GM12878 (cell line): ENCODE measurements at regions of chr3 and their contacts with region 1.

Region 1: DNA sequence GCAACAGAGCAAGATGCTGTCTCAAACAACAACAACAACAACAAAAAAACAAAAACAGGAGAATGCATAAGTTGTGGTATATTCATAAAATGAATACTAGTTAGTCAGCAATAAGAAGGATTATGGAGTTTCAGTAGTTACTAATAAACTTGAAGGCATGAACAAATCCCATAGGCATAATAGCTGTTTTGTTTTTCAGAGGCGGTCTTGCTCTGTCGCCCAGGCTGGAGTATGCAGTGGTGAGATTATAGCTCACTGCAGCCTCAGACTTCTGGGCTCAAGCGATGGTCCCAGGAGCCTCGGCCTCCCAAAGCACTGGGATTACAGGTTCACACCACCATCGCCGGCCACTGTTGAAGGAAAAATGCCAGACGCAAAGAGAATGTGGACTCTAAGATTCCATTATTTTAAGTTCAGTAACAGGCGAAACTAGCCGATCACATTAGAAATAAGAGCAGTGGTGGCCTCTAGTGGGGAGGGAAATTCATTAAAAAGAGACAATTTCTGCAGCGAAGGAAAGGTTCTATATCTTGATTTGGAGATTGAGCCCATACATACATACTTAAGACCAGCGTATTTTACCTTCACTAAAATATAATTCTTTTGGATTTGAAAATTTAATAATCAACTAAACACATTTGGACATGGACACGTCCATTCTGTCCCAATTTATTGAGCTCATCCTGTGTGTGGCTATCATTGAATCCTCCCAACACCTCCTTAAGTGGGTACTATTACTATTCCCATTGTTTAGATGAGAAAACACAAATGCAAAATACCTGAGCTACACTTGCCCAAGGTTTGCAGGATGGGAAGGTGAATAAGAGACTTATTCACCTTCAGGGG is 27.4 kb upstream of the HDAC11 start:
- DNase-seq: peak; percentile 17
- ATAC-seq: peak; percentile 62
- H3K4me3 ChIP-seq: peak overlapping the region; percentile 64
- H3K27ac ChIP-seq: no peak overlapping the region
- H3K4me1 ChIP-seq: peaks cover 4% of the 10 kb centered on the region
- H3K27me3 ChIP-seq: no peaks in the 10 kb centered on the region
- CTCF ChIP-seq: peak; percentile 52 to 75 (median 64)
- EP300 ChIP-seq: no peak
- POLR2A ChIP-seq: no peak
- RAD21 ChIP-seq: peak; percentile 85

Region 2: DNA sequence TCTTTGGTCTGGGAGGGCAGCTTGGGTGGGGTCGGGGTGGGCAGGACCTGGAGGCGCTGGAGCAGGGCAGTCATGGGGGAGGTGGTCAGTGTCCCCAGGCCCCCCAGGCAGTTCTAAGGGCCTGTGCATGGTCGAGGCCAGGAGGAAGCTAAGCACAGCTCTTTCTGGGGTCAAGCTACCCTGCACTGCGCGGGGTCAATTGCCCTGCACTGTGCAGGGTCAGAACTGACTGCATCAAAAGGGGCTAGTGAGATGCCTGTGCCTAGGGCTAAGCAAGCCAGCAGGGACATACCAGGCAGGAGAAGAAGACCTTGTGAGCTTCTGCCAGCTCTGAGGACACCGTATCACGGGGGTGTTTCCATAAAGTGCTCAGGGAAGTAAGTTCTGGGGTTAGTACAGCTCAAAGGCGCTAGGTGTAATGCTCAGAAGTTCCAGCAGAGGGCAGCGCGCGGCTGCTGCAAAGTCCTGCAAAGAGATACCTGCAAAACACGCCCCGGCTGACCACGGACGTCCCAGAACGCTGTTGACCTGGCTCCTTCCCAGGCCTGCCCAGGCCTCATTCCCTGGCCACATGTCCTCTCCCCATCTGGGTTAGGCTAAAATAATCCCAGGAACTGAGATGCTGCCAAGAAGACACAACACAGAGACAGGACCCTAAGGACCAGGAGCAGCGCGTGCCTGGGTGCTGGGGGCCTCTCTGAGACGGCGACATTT is 360.7 kb before region 1 on chr3:
- CTCF ChIA-PET with region 1: interaction called, 146 read pairs
- POLR2A ChIA-PET with region 1: interaction called, 3 read pairs
- RAD21 ChIA-PET with region 1: interaction called, 86 read pairs
- SMC1A ChIA-PET with region 1: interaction called, 86 read pairs
- in situ Hi-C with region 1: loop called (anchors 5 kb)
- intact Hi-C with region 1: loop called (anchors 1 kb)
- DNase-seq: no peak
- ATAC-seq: peak; percentile 86
- H3K4me3 ChIP-seq: no peak overlapping the region
- H3K27ac ChIP-seq: no peak overlapping the region
- H3K4me1 ChIP-seq: peaks cover 25% of the 10 kb centered on the region
- H3K27me3 ChIP-seq: no peaks in the 10 kb centered on the region
- CTCF ChIP-seq: peak; percentile 94 to 98 (median 95)
- EP300 ChIP-seq: no peak
- POLR2A ChIP-seq: no peak
- RAD21 ChIP-seq: peak; percentile 87

Region 3: DNA sequence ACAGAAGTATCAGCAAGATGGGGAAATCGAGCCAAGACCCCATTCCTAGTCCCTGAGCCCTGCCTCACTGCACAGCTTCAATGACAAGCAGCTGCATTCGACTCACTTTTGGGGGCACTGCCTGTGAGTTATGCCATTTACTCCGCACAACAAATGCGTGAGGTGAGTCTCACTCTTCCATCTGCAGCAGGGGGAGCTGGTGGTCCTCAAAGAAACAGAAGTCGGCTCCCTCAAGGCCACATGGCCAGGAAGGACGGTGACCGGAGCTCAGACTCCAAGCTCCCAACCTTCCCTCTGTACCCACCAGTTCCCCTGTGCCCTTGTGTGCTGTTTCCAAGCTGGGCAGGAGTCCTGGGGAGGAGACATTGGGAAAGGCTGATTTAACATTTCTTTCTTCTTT is 251.8 kb before region 1 on chr3:
- CTCF ChIA-PET with region 1: interaction called, 41 read pairs
- POLR2A ChIA-PET with region 1: no interaction called
- RAD21 ChIA-PET with region 1: interaction called, 32 read pairs
- SMC1A ChIA-PET with region 1: interaction called, 23 read pairs
- in situ Hi-C with region 1: no loop called
- intact Hi-C with region 1: no loop called
- DNase-seq: no peak
- ATAC-seq: peak; percentile 68
- H3K4me3 ChIP-seq: no peak overlapping the region
- H3K27ac ChIP-seq: no peak overlapping the region
- H3K4me1 ChIP-seq: no peaks in the 10 kb centered on the region
- H3K27me3 ChIP-seq: peaks cover 0 to 3% of the 10 kb centered on the region in 2 experiments; a peak in 3 of 4 replicates
- CTCF ChIP-seq: peak in 1 of 3 experiments; percentile 52; a peak in 2 of 6 replicates
- EP300 ChIP-seq: no peak
- POLR2A ChIP-seq: no peak
- RAD21 ChIP-seq: peak; percentile 35; the same call in 1 of the 2 replicates

Region 4: DNA sequence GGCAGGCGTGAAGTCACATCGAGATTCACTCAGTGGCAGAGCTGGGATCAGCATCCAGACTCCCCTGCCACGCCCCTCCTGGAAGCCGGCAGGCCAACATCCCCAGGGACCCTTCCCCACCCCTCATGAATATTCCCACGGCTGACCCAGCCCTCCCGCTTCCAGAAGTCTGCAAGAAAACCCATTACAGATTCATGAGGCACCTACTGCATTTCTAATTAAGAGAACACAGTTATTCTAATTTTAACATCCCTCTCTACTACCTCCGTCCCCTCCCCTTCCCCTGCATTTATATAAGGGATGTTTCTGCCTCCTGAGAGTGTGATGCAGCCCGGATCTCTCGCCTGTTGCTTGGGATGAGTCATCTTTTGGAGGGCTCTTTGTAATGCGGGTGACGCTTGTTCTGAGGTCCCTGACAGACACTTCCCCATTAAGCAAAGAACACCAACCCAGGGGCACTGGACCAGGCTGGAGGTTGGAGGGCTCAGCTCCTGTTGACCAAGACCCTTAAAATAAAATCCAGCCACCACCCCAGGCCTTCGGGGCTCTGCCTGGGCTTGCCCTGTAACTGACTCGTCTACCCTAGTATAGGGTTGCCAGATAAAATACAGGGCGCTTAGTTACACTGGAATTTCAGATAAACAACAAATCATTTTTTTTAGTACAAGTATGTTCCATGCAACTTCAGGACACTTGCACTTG is 151.3 kb before region 1 on chr3:
- CTCF ChIA-PET with region 1: interaction called, 21 read pairs
- POLR2A ChIA-PET with region 1: no interaction called
- RAD21 ChIA-PET with region 1: interaction called, 4 read pairs
- SMC1A ChIA-PET with region 1: interaction called, 11 read pairs
- in situ Hi-C with region 1: no loop called
- intact Hi-C with region 1: loop called (anchors 5 kb)
- DNase-seq: peak; percentile 28
- ATAC-seq: peak; percentile 86
- H3K4me3 ChIP-seq: no peak overlapping the region
- H3K27ac ChIP-seq: no peak overlapping the region
- H3K4me1 ChIP-seq: peaks cover 4% of the 10 kb centered on the region
- H3K27me3 ChIP-seq: no peaks in the 10 kb centered on the region
- CTCF ChIP-seq: no peak
- EP300 ChIP-seq: no peak
- POLR2A ChIP-seq: no peak
- RAD21 ChIP-seq: no peak

Region 5: GRCh38 chr3:13353936-13354542 is 98.7 kb before region 1 on chr3:
- CTCF ChIA-PET with region 1: interaction called, 16 read pairs
- POLR2A ChIA-PET with region 1: no interaction called
- RAD21 ChIA-PET with region 1: interaction called, 4 read pairs
- SMC1A ChIA-PET with region 1: interaction called, 11 read pairs
- in situ Hi-C with region 1: no loop called
- intact Hi-C with region 1: no loop called
- DNase-seq: no peak
- ATAC-seq: no peak
- H3K4me3 ChIP-seq: no peak overlapping the region
- H3K27ac ChIP-seq: no peak overlapping the region
- H3K4me1 ChIP-seq: no peaks in the 10 kb centered on the region
- H3K27me3 ChIP-seq: no peaks in the 10 kb centered on the region
- CTCF ChIP-seq: peak in 1 of 3 experiments; percentile 8; a peak in 1 of 6 replicates
- EP300 ChIP-seq: no peak
- POLR2A ChIP-seq: no peak
- RAD21 ChIP-seq: no peak

Region 6: GRCh38 chr3:13419505-13420044 is 33.1 kb before region 1 on chr3:
- CTCF ChIA-PET with region 1: interaction called, 99 read pairs
- POLR2A ChIA-PET with region 1: interaction called, 33 read pairs
- RAD21 ChIA-PET with region 1: interaction called, 66 read pairs
- SMC1A ChIA-PET with region 1: interaction called, 30 read pairs
- in situ Hi-C with region 1: no loop called
- intact Hi-C with region 1: loop called (anchors 1 kb)
- DNase-seq: no peak
- ATAC-seq: peak; percentile 25
- H3K4me3 ChIP-seq: peak overlapping the region; percentile 80
- H3K27ac ChIP-seq: peak overlapping the region; percentile 98
- H3K4me1 ChIP-seq: peaks cover 48% of the 10 kb centered on the region
- H3K27me3 ChIP-seq: no peaks in the 10 kb centered on the region
- CTCF ChIP-seq: 0 out of 6 replicates have a peak, but pooled peaks of 1 of the 3 experiments have one; percentile 11
- EP300 ChIP-seq: no peak
- POLR2A ChIP-seq: no peak
- RAD21 ChIP-seq: no peak

Region 7: DNA sequence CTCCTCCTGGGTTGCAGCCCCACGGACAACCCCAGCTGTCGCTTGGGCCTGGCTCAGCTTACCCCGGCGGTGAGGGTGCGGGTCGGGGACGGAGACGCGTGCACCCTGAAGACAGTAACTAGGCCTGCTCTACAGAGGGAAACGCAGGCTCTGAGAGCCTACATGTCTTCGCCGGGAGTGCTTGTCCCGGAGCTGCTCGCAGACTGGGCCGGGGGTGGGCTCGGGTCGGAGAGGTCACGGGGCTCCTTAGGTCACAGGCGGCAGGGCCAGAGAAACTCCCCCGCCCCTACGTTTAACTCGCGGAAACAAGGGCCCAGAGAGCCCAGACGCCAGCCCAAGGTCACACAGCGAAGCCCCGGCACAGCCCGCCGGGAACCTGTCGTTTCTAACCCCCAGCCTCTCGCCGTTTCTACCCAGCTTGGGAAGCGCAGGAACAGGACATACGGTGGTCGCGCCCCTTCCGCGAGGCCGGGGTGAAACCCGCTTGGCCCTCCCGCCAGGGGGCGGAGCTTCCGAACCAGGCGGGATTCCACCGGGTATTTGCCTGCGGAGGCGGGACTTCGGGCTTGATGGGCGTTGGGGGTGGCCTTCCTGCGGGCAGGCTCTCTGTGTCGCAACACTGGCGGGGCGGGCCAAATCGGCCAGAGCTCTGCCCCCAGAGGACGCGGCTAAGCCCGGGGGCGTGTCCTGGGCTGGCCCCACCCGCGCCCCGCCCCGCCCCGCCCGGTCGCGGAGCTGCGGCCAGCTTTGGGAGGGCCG is 27.0 kb after region 1 on chr3 and contains the start of gene HDAC11:
- CTCF ChIA-PET with region 1: interaction called, 14 read pairs
- POLR2A ChIA-PET with region 1: interaction called, 8 read pairs
- RAD21 ChIA-PET with region 1: interaction called, 25 read pairs
- SMC1A ChIA-PET with region 1: interaction called, 6 read pairs
- in situ Hi-C with region 1: no loop called
- intact Hi-C with region 1: no loop called
- DNase-seq: peak; percentile 81
- ATAC-seq: peak; percentile 99
- H3K4me3 ChIP-seq: peak within 1 kb of the TSS; percentile 82
- H3K27ac ChIP-seq: peak within 1 kb of the TSS; percentile 45
- H3K4me1 ChIP-seq: peaks cover 3% of the 10 kb centered on the region; the same call in 1 of the 2 replicates
- H3K27me3 ChIP-seq: no peaks in the 10 kb centered on the region; a peak in 2 of 4 replicates
- CTCF ChIP-seq: no peak; a peak in 1 of 6 replicates
- EP300 ChIP-seq: no peak
- POLR2A ChIP-seq: peak; percentile 87
- RAD21 ChIP-seq: no peak
- polyA plus RNA-seq, gene HDAC11: 0.04 TPM in 1 of 2 experiments, not detected in the other

Region 8: DNA sequence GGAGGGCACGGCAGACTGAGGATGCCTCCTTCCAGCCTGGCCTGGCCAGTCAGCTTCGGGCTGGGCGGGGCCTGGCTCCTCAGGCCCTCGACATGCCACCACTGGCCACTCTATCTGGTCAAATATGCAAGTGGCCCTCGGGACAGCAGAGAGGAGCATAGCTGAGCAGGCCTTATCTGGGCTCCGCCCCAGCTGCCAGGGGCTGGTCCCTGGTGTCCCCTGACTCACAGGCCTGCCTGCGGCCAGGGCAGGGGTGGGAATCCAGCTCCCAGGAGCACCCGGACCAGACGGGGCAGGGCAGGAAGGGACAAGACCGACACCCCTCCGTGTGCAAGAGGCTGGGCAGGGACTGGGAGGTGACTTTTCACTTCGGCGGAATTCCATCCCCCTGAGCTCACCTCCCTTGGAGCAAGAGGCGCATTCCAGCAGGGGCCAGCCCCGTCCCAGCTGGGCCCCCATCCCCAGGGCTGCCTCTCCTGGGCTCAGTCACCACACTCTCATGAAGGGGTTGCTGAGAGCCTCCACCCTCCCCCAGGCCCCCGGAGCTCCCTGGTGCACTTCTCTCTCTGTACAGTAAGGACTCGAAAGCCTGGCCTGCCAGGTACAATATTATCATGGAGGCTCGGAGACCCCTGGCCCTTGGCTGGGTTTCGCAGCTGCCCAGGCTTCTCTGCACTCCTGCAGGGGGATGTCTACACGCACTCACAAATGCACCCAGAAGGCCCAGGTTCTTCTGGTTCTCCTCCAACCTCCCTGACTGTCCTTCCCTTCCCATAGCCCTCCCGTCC is 397.6 kb after region 1 on chr3:
- CTCF ChIA-PET with region 1: no interaction called
- POLR2A ChIA-PET with region 1: no interaction called
- RAD21 ChIA-PET with region 1: no interaction called
- SMC1A ChIA-PET with region 1: no interaction called
- in situ Hi-C with region 1: no loop called
- intact Hi-C with region 1: no loop called
- DNase-seq: no peak
- ATAC-seq: no peak
- H3K4me3 ChIP-seq: no peak overlapping the region
- H3K27ac ChIP-seq: no peak overlapping the region
- H3K4me1 ChIP-seq: no peaks in the 10 kb centered on the region
- H3K27me3 ChIP-seq: no peaks in the 10 kb centered on the region; a peak in 2 of 4 replicates
- CTCF ChIP-seq: no peak
- EP300 ChIP-seq: no peak
- POLR2A ChIP-seq: no peak
- RAD21 ChIP-seq: no peak